ENCODE measurements at regions of chr2 and their contacts with region 1.

Region 1: GRCh38 chr2:37877457-37878315 is 47.4 kb upstream of the RMDN2 start:
- DNase-seq: no peak
- ATAC-seq: peak; percentile 77
- H3K4me3 ChIP-seq: no peak overlapping the region
- H3K27ac ChIP-seq: no peak overlapping the region
- H3K4me1 ChIP-seq: peaks cover 8% of the 10 kb centered on the region
- H3K27me3 ChIP-seq: peaks cover 0 to 2% of the 10 kb centered on the region in 2 experiments; a peak in 2 of 4 replicates
- CTCF ChIP-seq: peak; percentile 44 to 64 (median 63); a peak in 5 of 6 replicates
- EP300 ChIP-seq: no peak
- POLR2A ChIP-seq: no peak
- RAD21 ChIP-seq: peak; percentile 91

Region 2: DNA sequence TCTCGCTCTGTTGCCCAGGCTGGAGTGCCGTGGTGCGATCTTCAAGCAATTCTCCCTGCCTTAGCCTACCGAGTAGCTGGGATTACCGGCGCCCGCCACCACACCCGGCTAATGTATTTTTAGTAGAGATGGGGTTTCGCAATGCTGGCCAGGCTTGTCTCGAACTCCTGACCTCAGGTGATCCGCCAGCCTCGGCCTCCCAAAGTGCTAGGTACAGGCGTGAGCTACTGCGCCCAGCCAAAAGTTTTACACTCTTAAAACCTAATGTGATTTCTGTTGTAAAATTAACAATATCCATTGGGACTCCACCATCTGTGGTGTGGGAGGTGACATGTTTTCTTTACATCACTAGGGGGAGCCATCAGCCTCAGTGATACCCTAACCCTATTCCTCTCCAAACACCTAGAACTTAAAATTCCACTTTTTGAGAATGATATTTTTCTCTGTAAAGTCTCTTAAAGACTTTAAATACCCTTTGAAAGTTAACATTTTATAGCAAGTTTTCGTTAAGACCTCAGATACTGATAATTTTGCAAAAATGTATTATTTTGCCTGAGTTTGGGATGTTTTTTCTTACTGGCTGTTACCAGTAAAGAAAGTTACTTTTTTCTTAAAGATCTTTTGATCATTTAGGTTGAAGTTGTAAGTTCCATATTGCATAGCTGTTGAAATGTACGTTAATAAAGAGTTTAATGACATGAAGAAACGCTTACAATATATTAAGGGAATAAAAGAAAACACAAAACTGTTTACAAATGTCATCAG is 709.3 kb before region 1 on chr2:
- CTCF ChIA-PET with region 1: interaction called, 20 read pairs
- POLR2A ChIA-PET with region 1: no interaction called
- RAD21 ChIA-PET with region 1: interaction called, 3 read pairs
- SMC1A ChIA-PET with region 1: interaction called, 7 read pairs
- in situ Hi-C with region 1: no loop called
- intact Hi-C with region 1: loop called (anchors 5 kb)
- DNase-seq: no peak
- ATAC-seq: peak; percentile 91
- H3K4me3 ChIP-seq: no peak overlapping the region
- H3K27ac ChIP-seq: no peak overlapping the region
- H3K4me1 ChIP-seq: no peaks in the 10 kb centered on the region
- H3K27me3 ChIP-seq: no peaks in the 10 kb centered on the region
- CTCF ChIP-seq: peak; percentile 70 to 75 (median 73)
- EP300 ChIP-seq: no peak
- POLR2A ChIP-seq: no peak
- RAD21 ChIP-seq: peak; percentile 73

Region 3: GRCh38 chr2:37623971-37624900 is 253.4 kb before region 1 on chr2:
- CTCF ChIA-PET with region 1: interaction called, 25 read pairs
- POLR2A ChIA-PET with region 1: interaction called, 4 read pairs
- RAD21 ChIA-PET with region 1: interaction called, 27 read pairs
- SMC1A ChIA-PET with region 1: interaction called, 21 read pairs
- in situ Hi-C with region 1: no loop called
- intact Hi-C with region 1: no loop called
- DNase-seq: peak; percentile 93
- ATAC-seq: peak; percentile 79
- H3K4me3 ChIP-seq: peak overlapping the region; percentile 24; the same call in 1 of the 2 replicates
- H3K27ac ChIP-seq: peak overlapping the region; percentile 97
- H3K4me1 ChIP-seq: peaks cover 54% of the 10 kb centered on the region
- H3K27me3 ChIP-seq: no peaks in the 10 kb centered on the region
- CTCF ChIP-seq: no peak
- EP300 ChIP-seq: peak; percentile 56 to 80
- POLR2A ChIP-seq: no peak
- RAD21 ChIP-seq: peak; percentile 1; the same call in 1 of the 2 replicates

Region 4: GRCh38 chr2:37781028-37781427 is 96.7 kb before region 1 on chr2:
- CTCF ChIA-PET with region 1: interaction called, 11 read pairs
- POLR2A ChIA-PET with region 1: no interaction called
- RAD21 ChIA-PET with region 1: interaction called, 7 read pairs
- SMC1A ChIA-PET with region 1: interaction called, 3 read pairs
- in situ Hi-C with region 1: no loop called
- intact Hi-C with region 1: no loop called
- DNase-seq: no peak
- ATAC-seq: no peak
- H3K4me3 ChIP-seq: no peak overlapping the region
- H3K27ac ChIP-seq: no peak overlapping the region
- H3K4me1 ChIP-seq: no peaks in the 10 kb centered on the region
- H3K27me3 ChIP-seq: no peaks in the 10 kb centered on the region
- CTCF ChIP-seq: no peak
- EP300 ChIP-seq: no peak
- POLR2A ChIP-seq: no peak
- RAD21 ChIP-seq: no peak

Region 5: GRCh38 chr2:37837628-37838328 is 39.9 kb before region 1 on chr2:
- CTCF ChIA-PET with region 1: interaction called, 312 read pairs
- POLR2A ChIA-PET with region 1: interaction called, 12 read pairs
- RAD21 ChIA-PET with region 1: interaction called, 185 read pairs
- SMC1A ChIA-PET with region 1: interaction called, 197 read pairs
- in situ Hi-C with region 1: no loop called
- intact Hi-C with region 1: loop called (anchors 1 kb)
- DNase-seq: no peak
- ATAC-seq: no peak
- H3K4me3 ChIP-seq: no peak overlapping the region
- H3K27ac ChIP-seq: no peak overlapping the region
- H3K4me1 ChIP-seq: peaks cover 4% of the 10 kb centered on the region; the same call in 1 of the 2 replicates
- H3K27me3 ChIP-seq: no peaks in the 10 kb centered on the region
- CTCF ChIP-seq: no peak
- EP300 ChIP-seq: no peak
- POLR2A ChIP-seq: no peak
- RAD21 ChIP-seq: no peak

Region 6: GRCh38 chr2:37865640-37866039 is 12.0 kb before region 1 on chr2:
- CTCF ChIA-PET with region 1: interaction called, 23 read pairs
- POLR2A ChIA-PET with region 1: interaction called, 3 read pairs
- RAD21 ChIA-PET with region 1: interaction called, 6 read pairs
- SMC1A ChIA-PET with region 1: interaction called, 28 read pairs
- in situ Hi-C with region 1: no loop called
- intact Hi-C with region 1: no loop called
- DNase-seq: no peak
- ATAC-seq: no peak
- H3K4me3 ChIP-seq: no peak overlapping the region
- H3K27ac ChIP-seq: no peak overlapping the region
- H3K4me1 ChIP-seq: no peaks in the 10 kb centered on the region
- H3K27me3 ChIP-seq: no peaks in the 10 kb centered on the region
- CTCF ChIP-seq: no peak
- EP300 ChIP-seq: no peak
- POLR2A ChIP-seq: no peak
- RAD21 ChIP-seq: no peak

Region 7: GRCh38 chr2:37914340-37914739 is 36.7 kb after region 1 on chr2:
- CTCF ChIA-PET with region 1: no interaction called
- POLR2A ChIA-PET with region 1: no interaction called
- RAD21 ChIA-PET with region 1: no interaction called
- SMC1A ChIA-PET with region 1: no interaction called
- in situ Hi-C with region 1: no loop called
- intact Hi-C with region 1: no loop called
- DNase-seq: no peak
- ATAC-seq: no peak
- H3K4me3 ChIP-seq: no peak overlapping the region
- H3K27ac ChIP-seq: no peak overlapping the region
- H3K4me1 ChIP-seq: no peaks in the 10 kb centered on the region
- H3K27me3 ChIP-seq: no peaks in the 10 kb centered on the region
- CTCF ChIP-seq: no peak
- EP300 ChIP-seq: no peak
- POLR2A ChIP-seq: no peak
- RAD21 ChIP-seq: no peak

Region 8: GRCh38 chr2:38274286-38275276 is 396.9 kb after region 1 on chr2:
- CTCF ChIA-PET with region 1: interaction called, 11 read pairs
- POLR2A ChIA-PET with region 1: no interaction called
- RAD21 ChIA-PET with region 1: interaction called, 9 read pairs
- SMC1A ChIA-PET with region 1: interaction called, 13 read pairs
- in situ Hi-C with region 1: no loop called
- intact Hi-C with region 1: no loop called
- DNase-seq: peak; percentile 65
- ATAC-seq: peak; percentile 89
- H3K4me3 ChIP-seq: no peak overlapping the region
- H3K27ac ChIP-seq: no peak overlapping the region
- H3K4me1 ChIP-seq: no peaks in the 10 kb centered on the region
- H3K27me3 ChIP-seq: no peaks in the 10 kb centered on the region
- CTCF ChIP-seq: peak; percentile 53 to 79 (median 63); a peak in 5 of 6 replicates
- EP300 ChIP-seq: no peak
- POLR2A ChIP-seq: no peak
- RAD21 ChIP-seq: peak; percentile 93